Activated naive CD4-positive, alpha-beta T cell treated with anti-CD3 and anti-CD28 coated beads, Interleukin-2, amount 10 ng/mL, durations not matched to agents 7 days and 5 days (primary cell): ENCODE measurements at regions of chr6 and their contacts with region 1.

Region 1: DNA sequence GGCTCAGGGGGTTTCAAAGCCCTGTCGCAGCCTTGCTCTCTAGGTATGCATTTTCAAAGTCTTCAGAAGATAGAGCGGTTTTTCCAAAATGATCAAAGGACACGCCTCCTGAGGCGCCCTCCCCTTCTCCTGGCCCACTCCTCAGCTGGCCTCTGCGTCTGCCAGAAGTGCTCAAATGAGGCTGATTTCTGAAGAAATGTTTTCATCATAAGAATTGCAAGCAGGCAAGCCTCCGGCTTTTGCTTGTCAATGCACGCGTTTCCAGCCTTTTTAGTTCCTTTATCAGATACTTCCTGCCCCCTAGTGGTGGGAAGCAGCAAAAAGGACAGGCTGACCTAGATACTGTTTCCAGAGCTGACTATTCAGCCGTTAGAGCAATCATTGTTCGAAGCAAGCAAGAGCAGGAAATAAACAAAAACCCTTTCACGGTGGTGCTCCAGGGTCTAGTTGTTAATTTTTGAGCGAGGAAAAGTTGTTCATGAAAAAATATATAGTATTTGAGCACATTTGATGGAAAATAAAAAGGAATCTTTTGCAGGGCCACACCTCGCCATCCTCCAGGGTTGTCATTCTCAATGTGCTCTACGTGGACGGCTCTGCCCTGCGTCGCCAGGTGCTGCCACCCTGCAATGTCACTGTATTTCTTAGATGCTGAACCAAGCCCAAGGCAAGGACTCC is 93.4 kb upstream of the ASF1A start:
- DNase-seq: peak; percentile 91
- H3K4me3 Mint-ChIP-seq: peak overlapping the region; percentile 29
- H3K27ac Mint-ChIP-seq: peak overlapping the region; percentile 76
- H3K4me1 Mint-ChIP-seq: peaks cover 42% of the 10 kb centered on the region
- H3K27me3 Mint-ChIP-seq: no peaks in the 10 kb centered on the region

Region 2: DNA sequence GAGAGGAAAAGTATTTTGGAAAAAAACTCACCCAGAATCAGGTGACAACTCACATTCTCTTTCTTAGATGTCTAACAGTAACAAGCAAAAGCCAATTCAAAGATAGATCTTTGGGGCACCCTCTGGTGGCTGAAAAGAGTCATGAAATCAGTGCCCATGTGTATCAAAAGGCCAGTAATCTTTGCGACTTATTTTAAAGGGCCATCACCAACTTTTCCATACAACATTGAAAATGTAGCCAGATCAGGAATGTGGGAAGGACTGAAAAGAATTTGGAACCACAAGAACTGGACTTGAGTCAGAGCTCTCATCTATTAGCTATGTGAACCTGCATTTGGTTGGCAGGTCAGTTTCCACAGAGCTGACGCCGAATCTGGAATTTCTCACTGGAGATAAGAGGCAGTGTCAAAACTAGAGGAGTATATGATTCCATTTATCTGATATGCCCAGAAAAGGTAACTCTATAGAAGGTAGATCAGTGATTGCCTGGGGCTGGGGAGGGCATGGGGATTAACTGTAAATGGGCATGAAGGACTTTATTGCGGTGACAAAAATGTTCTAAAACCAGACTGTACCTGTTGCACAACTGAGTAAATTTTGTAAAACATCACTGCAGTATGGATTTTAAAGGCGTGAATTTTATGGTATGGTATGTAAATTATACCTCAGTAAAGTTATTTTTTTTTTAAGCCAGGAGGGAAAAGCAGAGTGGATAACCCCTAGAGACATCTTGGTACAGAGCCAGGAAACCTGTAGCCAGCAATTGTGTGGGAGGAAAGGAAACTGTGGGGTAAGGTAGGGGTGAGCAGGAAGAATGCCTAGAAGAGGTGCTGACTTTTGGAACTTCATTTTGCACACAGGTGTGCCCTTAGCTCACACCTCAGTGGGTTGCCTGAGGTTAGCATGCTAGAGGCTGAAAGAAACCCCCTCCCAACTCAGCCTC is 23.7 kb before region 1 on chr6:
- CTCF ChIA-PET with region 1: interaction called, 10 read pairs
- DNase-seq: peak; percentile 79
- H3K4me3 Mint-ChIP-seq: no peak overlapping the region
- H3K27ac Mint-ChIP-seq: no peak overlapping the region
- H3K4me1 Mint-ChIP-seq: peaks cover 14% of the 10 kb centered on the region
- H3K27me3 Mint-ChIP-seq: peaks cover 21% of the 10 kb centered on the region

Region 3: GRCh38 chr6:118787724-118788423 is 12.7 kb before region 1 on chr6:
- CTCF ChIA-PET with region 1: interaction called, 10 read pairs
- DNase-seq: peak; percentile 30
- H3K4me3 Mint-ChIP-seq: no peak overlapping the region
- H3K27ac Mint-ChIP-seq: peak overlapping the region; percentile 49
- H3K4me1 Mint-ChIP-seq: peaks cover 22% of the 10 kb centered on the region
- H3K27me3 Mint-ChIP-seq: peaks cover 5% of the 10 kb centered on the region

Region 4: DNA sequence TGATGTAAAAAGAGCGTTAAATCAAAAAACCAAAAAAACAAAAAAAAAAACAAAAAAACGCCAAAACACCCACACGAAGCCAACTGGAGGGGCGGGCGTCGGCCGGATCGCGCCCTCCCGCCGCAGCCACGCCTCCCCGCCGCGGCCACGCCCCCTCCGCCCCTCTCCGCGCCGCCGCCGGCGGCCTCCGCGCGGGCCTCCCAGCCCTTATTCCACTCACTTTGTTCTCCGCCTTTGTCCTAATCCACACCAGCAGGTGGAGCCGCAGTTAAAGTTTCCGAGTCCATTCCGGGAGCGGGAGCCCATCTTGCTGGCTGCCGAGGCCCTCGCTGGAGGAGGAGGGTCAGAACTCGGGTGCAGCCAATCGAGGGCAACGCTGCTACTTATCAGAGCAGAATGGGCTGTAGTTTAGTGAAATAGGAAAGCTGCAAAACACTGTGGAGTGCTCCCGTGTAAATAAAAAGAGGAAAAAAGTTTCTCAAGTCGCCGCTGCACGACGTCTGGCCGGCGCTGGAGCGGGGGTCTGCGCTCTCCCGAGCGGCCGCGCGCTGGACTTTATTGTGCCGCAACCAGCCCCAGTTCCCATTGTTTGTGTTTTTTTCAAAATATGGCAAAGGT is 93.4 kb after region 1 on chr6 and contains the start of gene ASF1A:
- CTCF ChIA-PET with region 1: interaction called, 28 read pairs
- DNase-seq: peak; percentile 98
- H3K4me3 Mint-ChIP-seq: peak within 1 kb of the TSS; percentile 92
- H3K27ac Mint-ChIP-seq: peak within 1 kb of the TSS; percentile 100
- H3K4me1 Mint-ChIP-seq: peaks cover 55% of the 10 kb centered on the region
- H3K27me3 Mint-ChIP-seq: no peaks in the 10 kb centered on the region